ENCODE measurements at regions of chr18 and their contacts with region 1.

Region 1: GRCh38 chr18:26090130-26091046 is at the start of gene SS18:
- DNase-seq: peak; percentile 84 to 96 (median 92)

Region 2: DNA sequence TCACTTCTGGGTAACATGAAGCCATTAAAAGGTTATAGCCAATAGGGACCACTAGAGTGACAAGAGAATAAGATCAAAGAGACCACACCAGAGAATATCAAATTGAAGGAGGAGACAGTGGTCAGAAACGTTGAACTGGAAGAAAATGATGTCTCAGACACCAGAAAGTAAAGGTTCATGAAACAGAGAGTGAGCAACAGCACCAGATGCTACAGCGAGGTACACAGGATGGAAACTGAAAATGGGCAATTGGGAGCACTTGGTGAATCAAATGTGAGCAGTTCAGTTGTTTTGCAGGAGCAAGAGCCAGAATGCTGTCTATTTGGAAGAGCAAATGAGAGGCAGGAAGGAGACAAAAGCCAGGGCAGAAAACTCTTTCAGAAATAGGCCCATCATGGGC is 162.6 kb before region 1 on chr18:
- intact Hi-C with region 1: no loop called
- DNase-seq: no peak

Region 3: GRCh38 chr18:26226229-26227005 is 136.0 kb after region 1 on chr18 and contains the start of gene TAF4B:
- intact Hi-C with region 1: loop called (anchors 5 kb)
- DNase-seq: peak; percentile 88 to 98 (median 95)

Measured in head of caudate nucleus (tissue), 42 donors.